Naive thymus-derived CD8-positive, alpha-beta T cell (primary cell): ENCODE measurements at regions of chr17 and their contacts with region 1.

Region 1: DNA sequence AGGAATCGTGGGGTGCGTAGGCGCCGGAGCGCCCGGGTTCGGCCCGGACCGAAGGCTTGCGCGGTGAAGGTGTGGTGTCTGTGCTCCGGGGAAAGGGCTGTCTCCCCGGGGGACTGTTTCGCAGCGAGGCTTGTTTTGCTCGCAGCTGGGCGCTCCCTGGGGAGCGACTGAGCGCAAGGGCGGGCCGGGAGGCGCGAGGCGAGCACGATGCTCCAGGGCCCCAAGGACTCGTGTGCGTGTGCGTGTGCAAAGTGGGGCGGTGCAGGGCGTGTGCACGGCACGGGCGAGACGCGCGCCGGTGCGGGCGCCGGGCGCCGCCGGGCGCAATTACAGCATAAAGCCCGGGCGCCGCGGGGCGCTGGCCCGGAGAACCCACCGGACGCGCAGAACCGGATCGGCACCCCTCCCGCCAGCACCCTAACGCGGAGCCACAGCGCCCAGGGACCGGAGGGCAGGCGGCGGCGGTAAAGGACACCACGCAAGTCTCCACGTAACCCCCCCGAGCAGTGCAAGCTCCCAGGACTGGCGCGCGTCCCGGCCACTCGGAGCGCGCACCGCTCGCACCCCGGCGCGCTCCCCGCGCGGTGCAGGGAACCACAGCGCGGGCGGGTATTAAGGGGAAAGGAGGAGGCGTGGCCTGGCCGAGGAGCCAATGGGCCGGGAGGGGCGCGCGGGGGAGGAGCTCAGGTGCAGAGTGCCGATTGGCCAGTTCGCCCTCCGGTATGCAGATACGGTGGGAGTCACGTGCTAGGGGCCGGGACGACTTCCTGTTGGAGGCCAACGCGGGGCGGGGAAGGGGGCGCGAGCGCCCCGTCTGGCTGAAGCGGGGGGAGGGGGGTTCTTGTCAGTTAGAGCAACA is at the start of gene TNRC6C:
- DNase-seq: peak; percentile 97 to 100 (median 100)
- ATAC-seq: peak; percentile 78 to 86
- H3K4me3 Mint-ChIP-seq: peak within 1 kb of the TSS; percentile 96 to 100 (median 99)
- H3K27ac Mint-ChIP-seq: peak within 1 kb of the TSS; percentile 94 to 99 (median 97)
- H3K4me1 Mint-ChIP-seq: peaks cover 33 to 49% (median 42%) of the 10 kb centered on the region in 4 donors
- H3K27me3 Mint-ChIP-seq: peaks cover 0 to 11% (median 0%) of the 10 kb centered on the region in 5 donors
- polyA plus RNA-seq, gene TNRC6C: 4.9 to 8.6 (median 5.8) TPM

Region 2: DNA sequence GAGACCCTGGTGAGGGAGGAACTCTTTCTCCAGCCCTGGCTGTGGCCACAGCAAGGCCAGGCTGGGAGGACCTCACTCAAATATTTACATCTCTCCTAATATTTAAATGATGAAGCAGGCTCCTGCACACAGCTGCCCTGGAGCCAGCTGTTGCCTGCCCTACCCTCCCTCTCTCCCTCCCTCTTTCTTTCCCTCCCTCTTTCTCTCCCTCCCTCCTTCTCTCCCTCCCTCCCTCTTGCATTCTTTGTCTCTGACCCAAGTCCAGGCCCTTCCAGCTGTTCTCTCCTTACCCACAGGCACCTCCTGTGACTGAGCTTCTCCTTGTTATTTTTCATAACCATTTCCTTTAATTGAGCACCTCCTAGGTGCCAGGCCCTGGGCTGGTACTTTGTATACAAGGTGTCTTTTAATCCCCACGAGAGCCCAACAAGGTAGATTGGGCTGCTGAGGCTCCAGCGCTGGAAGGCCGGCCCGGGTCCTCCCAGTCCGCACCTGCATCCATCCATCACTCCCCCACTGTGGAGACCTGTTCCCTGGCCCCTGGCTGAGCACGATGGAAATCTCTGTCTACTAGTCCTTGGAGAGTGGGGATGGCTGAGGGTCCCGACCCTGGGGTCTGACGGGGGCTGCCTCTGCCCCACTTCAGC is 575.0 kb before region 1 on chr17:
- POLR2A ChIA-PET with region 1: interaction called, 11 read pairs
- DNase-seq: no peak
- ATAC-seq: peak; percentile 7 to 9
- H3K4me3 Mint-ChIP-seq: peak overlapping the region in 9 of 10 donors; percentile 75 to 90 (median 82)
- H3K27ac Mint-ChIP-seq: peak overlapping the region; percentile 75 to 94 (median 90)
- H3K4me1 Mint-ChIP-seq: peaks cover 49 to 94% (median 88%) of the 10 kb centered on the region in 4 donors
- H3K27me3 Mint-ChIP-seq: no peaks in the 10 kb centered on the region

Region 3: DNA sequence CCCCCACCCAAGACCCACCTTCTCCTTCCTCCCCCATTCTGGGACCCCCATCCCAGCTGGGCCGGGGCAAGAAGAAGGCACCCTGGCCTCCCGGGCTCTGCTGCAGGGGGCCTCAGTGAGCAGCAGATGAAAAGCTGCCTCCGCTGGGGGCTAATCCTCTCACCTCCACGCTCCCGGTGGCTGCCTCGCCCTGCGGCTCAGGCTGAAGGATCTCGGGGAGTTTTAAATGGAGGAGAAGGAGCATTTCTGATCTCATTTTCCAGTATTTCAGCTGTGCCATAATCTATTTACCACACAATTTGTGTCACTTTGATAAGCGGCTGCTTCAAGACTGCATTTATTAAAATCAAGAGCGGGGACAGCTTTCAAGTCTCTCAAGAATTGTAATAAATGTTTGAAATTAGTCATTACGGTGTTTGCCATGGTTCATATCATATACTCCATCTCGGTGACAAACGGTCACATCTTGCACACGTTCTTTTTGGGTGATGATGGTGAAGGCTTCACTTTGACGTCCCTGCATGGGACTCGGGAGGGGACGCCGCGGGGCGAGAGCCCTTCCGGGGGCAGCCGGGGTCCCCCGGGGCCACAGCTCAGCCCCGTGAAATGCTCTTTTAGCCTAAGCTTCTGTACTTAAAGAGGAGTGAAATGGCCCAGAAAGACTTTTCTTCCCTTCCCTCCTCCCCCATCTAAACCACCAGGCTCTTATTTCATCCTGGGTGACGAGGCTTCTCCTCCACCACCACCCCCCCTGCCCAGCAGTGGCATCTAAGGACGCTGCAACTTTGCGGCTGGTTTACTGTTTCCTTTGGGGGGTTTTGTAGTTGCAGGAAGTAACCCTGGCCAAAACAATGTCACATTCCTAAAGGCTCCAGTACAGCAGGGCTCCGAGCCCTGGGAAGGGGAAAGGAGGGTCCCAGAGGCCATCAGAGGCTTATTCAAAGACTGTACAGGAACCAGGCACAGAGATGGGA is 312.7 kb before region 1 on chr17:
- POLR2A ChIA-PET with region 1: interaction called, 36 read pairs
- DNase-seq: peak; percentile 28 to 82 (median 70)
- ATAC-seq: peak; percentile 90 to 95
- H3K4me3 Mint-ChIP-seq: peak overlapping the region; percentile 74 to 90 (median 84)
- H3K27ac Mint-ChIP-seq: peak overlapping the region; percentile 89 to 98 (median 97)
- H3K4me1 Mint-ChIP-seq: peaks cover 18 to 42% (median 29%) of the 10 kb centered on the region in 4 donors
- H3K27me3 Mint-ChIP-seq: no peaks in the 10 kb centered on the region

Region 4: DNA sequence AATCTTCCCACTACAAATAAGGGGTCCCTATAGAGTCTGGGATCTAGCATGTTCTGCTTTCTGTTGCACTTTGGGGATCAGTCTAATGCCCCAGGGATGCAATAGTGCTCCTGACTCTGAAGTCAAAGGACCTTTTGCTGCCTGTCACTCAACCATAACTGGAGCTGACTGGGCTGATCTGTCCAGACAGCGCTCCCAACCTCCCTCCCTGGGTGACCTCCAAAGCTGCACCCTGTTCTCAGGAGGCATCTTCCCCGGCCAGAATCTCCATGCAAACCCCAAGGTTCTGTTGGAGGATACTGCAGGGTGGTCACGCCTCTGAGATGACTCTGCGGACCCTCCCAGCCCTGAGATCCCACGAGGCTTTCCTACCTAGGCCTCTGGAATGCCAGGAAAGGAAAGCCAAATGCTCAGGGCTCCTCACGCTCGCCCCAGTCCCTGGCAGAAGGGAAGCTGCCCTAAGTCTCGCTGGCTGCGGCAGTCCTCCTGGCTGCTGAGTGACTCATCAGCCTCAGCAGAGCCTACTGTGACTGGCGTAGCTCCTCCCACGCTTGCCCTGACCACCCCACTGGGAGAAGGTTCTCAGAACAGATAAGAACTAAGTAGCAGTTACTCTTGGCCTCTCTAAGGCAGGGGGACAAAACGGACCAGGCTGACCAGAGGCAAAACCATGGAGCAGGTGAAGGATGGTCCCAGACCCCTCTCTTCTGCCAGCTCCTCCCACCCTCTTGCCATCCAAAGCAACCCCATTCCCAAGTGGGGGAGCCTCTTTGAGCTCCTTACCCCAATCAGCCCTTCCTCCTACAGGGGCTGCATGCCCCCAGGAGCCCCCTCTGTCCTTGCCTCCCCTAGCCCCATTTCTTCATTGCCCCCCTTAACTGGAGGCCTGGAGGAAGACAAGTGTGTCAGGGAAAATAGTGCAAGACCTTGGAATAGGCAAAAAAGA is 123.6 kb before region 1 on chr17:
- POLR2A ChIA-PET with region 1: interaction called, 10 read pairs
- DNase-seq: peak in 1 of 10 donors; percentile 47
- ATAC-seq: peak; percentile 48 to 89
- H3K4me3 Mint-ChIP-seq: peak overlapping the region in 1 of 10 donors; percentile 6
- H3K27ac Mint-ChIP-seq: peak overlapping the region in 4 of 10 donors; percentile 4 to 52 (median 26)
- H3K4me1 Mint-ChIP-seq: peaks cover 13 to 39% (median 36%) of the 10 kb centered on the region in 4 donors
- H3K27me3 Mint-ChIP-seq: peaks cover 0 to 12% (median 0%) of the 10 kb centered on the region in 5 donors

Region 5: DNA sequence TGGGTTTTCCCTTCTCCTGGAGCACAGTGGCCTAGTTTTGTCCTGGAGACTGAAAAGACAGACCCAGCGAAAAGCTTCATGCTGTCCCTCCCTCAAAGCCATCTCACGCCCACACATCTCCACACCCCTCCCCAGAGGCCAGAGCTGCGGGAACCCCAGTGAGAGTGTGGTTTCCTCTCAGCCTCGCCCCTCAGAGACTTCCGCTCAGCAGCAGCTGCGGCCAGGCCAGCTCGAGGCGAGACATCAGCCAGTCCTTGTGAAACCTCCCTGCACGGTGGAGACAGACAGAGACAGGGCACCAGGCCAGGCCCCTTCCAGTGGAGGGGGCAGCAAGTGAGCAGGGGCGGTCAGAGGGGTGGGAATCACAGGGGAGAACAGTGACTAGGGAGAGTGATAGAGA is 76.5 kb before region 1 on chr17:
- POLR2A ChIA-PET with region 1: interaction called, 166 read pairs
- DNase-seq: peak; percentile 39 to 82 (median 60)
- ATAC-seq: peak; percentile 17 to 37
- H3K4me3 Mint-ChIP-seq: peak overlapping the region; percentile 72 to 95 (median 84)
- H3K27ac Mint-ChIP-seq: peak overlapping the region; percentile 93 to 100 (median 98)
- H3K4me1 Mint-ChIP-seq: peaks cover 47 to 95% (median 93%) of the 10 kb centered on the region in 4 donors
- H3K27me3 Mint-ChIP-seq: no peaks in the 10 kb centered on the region

Region 6: DNA sequence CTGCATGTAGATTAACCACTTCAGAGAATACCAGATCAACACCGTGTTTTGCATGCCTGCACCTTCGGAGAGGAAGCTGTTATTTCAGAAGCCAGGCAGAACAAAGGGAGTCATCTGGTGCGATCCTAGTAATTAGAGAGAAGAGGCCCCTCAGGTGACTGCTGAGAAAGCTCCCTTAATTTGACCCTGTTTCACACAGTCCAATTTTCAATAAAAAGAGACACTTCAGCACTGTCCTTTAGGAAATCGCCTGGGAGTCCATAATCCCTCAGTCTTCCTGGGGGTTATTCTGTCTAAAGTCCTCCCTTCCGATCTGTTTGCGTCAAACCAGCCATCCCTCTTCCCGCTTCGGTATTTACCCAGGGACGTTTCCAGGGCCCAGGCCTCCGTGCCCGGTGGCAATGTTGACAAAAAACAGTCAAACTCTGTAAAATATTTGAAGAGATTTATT is 22.9 kb before region 1 on chr17:
- POLR2A ChIA-PET with region 1: interaction called, 16 read pairs
- DNase-seq: peak in 3 of 10 donors; percentile 15 to 46 (median 46)
- ATAC-seq: peak; percentile 63 to 69
- H3K4me3 Mint-ChIP-seq: peak overlapping the region in 8 of 10 donors; percentile 6 to 67 (median 40)
- H3K27ac Mint-ChIP-seq: peak overlapping the region in 4 of 10 donors; percentile 4 to 74 (median 46)
- H3K4me1 Mint-ChIP-seq: peaks cover 22 to 36% (median 27%) of the 10 kb centered on the region in 4 donors
- H3K27me3 Mint-ChIP-seq: peaks cover 0 to 18% (median 2%) of the 10 kb centered on the region in 5 donors

Region 7: GRCh38 chr17:78013683-78014467 is 55.8 kb after region 1 on chr17:
- POLR2A ChIA-PET with region 1: interaction called, 69 read pairs
- DNase-seq: peak in 9 of 10 donors; percentile 37 to 76 (median 55)
- ATAC-seq: peak; percentile 67 to 80
- H3K4me3 Mint-ChIP-seq: no peak overlapping the region
- H3K27ac Mint-ChIP-seq: peak overlapping the region in 7 of 10 donors; percentile 35 to 88 (median 63)
- H3K4me1 Mint-ChIP-seq: peaks cover 17 to 42% (median 32%) of the 10 kb centered on the region in 4 donors
- H3K27me3 Mint-ChIP-seq: no peaks in the 10 kb centered on the region